ENCODE measurements at regions of chr1 and their contacts with region 1.

Region 1: DNA sequence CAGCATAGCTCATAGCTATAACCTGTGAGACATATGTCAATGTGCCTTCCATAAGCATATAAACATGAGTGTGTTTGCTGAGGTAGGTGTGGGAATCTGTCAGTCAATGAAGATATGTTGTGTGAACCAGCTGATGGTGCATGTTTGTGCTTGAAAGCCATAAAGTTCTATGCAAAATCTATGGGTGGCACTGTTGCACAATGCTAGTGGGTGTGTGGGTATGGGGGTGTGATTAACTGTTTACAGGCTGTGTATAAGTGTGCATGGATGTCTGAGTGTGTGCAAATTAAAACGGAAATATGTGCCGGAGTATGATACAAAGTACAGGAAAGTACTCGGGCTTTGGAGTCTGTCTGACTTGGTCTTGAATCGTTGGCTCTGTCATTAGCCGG is 1.0 kb upstream of the ATP2B4 start:
- DNase-seq: peak; percentile 60
- H3K4me3 Mint-ChIP-seq: peak overlapping the region; percentile 96
- H3K27ac Mint-ChIP-seq: peak overlapping the region; percentile 91
- H3K4me1 Mint-ChIP-seq: peaks cover 66% of the 10 kb centered on the region
- H3K27me3 Mint-ChIP-seq: no peaks in the 10 kb centered on the region

Region 2: DNA sequence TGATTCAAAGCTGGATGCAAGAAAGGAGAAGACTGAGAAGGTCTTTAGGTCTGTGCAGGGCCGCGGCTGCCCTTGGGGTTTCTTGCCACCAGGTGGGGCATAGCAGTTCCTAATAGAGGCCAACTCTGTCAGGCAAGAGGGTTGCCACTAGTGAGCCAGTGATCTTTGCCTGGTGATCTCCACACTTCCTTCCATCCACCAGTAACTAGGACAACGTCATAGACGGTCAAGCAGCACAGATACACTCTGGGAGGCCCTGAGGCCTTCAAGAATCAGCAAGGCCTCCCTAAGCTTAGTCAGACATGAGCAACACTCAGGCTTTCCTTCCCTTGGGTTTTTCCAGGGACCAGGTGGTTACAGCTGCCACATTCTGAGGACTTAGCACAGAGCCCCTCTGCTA is 31.9 kb before region 1 on chr1:
- intact Hi-C with region 1: loop called (anchors 5 kb)
- DNase-seq: peak; percentile 39
- H3K4me3 Mint-ChIP-seq: no peak overlapping the region
- H3K27ac Mint-ChIP-seq: peak overlapping the region; percentile 2
- H3K4me1 Mint-ChIP-seq: peaks cover 17% of the 10 kb centered on the region
- H3K27me3 Mint-ChIP-seq: peaks cover 8% of the 10 kb centered on the region

Region 3: DNA sequence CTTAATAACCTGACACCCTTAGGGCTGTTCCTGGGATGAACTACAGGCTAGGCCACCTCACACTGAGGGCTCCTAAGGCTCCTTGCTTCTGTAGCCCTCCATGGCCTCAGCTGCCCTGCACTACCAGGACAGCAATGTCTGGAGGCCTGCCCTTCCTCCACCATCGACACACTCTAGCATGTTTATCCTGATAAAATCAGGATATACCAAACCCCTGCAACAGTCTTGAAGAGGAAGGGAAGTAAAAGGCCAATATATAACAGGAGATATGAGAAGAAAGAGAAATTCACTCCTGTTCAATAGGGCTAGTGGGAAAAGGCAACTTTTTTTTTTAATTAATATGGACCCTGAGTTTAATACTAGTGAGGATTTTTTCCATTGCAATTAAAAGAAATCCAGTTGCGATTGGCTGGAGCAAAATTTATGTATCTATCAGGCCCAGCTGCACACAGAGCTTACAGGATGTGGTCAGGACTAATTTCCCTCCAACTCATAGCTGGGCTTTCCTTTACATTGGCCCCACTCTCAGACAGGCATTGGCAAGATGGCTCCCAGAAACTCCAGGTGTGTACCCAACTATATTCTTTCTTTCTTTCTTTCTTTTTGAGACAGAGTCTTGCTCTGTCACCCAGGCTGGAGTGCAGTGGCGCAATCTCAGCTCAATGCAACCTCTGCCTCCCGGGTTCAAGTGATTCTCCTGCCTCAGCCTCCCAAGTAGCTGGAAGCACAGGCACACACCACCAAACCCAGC is 12.5 kb before region 1 on chr1:
- intact Hi-C with region 1: loop called (anchors 1 kb)
- DNase-seq: no peak
- H3K4me3 Mint-ChIP-seq: no peak overlapping the region
- H3K27ac Mint-ChIP-seq: peak overlapping the region; percentile 67
- H3K4me1 Mint-ChIP-seq: peaks cover 52% of the 10 kb centered on the region
- H3K27me3 Mint-ChIP-seq: no peaks in the 10 kb centered on the region

Region 4: DNA sequence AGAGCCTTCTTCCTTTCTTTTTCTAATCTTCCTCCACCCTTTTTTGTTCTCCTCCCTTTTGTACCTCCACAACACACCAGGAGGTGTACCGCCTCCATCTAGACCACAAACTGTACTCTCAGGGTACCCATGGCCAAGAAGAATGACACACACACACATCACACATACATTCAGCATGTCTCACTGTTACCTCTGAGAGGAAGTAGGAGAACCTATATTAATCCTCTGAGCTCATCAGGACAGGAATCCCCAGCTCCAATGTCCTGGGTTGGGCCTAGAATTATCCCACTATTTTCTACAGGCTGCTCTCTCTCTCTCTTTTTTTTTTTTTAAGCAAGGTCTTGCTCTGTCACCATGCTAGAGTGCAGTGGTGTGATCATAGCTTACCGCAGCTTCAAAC is 37.7 kb after region 1 on chr1:
- intact Hi-C with region 1: loop called (anchors 1 kb)
- DNase-seq: no peak
- H3K4me3 Mint-ChIP-seq: peak overlapping the region; percentile 30
- H3K27ac Mint-ChIP-seq: peak overlapping the region; percentile 85
- H3K4me1 Mint-ChIP-seq: peaks cover 53% of the 10 kb centered on the region
- H3K27me3 Mint-ChIP-seq: no peaks in the 10 kb centered on the region

Region 5: GRCh38 chr1:203702130-203702577 is 76.5 kb after region 1 on chr1:
- intact Hi-C with region 1: loop called (anchors 1 kb)
- DNase-seq: peak; percentile 36
- H3K4me3 Mint-ChIP-seq: no peak overlapping the region
- H3K27ac Mint-ChIP-seq: peak overlapping the region; percentile 59
- H3K4me1 Mint-ChIP-seq: peaks cover 12% of the 10 kb centered on the region
- H3K27me3 Mint-ChIP-seq: no peaks in the 10 kb centered on the region

Measured in activated T-helper 2 cell treated with anti-CD3 and anti-CD28 coated beads, Interferon-gamma antibody, Interleukin-2, Interleukin-4, amounts not matched to agents 10 μg/mL and 5 μg/mL and 100 μg/mL, durations not matched to agents 14 hours and 24 hours and 36 hours (primary cell).